Common myeloid progenitor, CD34-positive (primary cell): ENCODE measurements at regions of chr6 and their contacts with region 1.

Region 1: GRCh38 chr6:2931970-2932748 is 29.1 kb upstream of the SERPINB9 start:
- DNase-seq: peak; percentile 84 to 91 (median 90)
- H3K4me3 ChIP-seq: peak overlapping the region in 4 of 7 experiments; percentile 21 to 67 (median 52)
- H3K27ac ChIP-seq: no peak overlapping the region
- H3K4me1 ChIP-seq: peaks cover 0 to 21% (median 10%) of the 10 kb centered on the region in 4 experiments
- H3K27me3 ChIP-seq: no peaks in the 10 kb centered on the region

Region 2: DNA sequence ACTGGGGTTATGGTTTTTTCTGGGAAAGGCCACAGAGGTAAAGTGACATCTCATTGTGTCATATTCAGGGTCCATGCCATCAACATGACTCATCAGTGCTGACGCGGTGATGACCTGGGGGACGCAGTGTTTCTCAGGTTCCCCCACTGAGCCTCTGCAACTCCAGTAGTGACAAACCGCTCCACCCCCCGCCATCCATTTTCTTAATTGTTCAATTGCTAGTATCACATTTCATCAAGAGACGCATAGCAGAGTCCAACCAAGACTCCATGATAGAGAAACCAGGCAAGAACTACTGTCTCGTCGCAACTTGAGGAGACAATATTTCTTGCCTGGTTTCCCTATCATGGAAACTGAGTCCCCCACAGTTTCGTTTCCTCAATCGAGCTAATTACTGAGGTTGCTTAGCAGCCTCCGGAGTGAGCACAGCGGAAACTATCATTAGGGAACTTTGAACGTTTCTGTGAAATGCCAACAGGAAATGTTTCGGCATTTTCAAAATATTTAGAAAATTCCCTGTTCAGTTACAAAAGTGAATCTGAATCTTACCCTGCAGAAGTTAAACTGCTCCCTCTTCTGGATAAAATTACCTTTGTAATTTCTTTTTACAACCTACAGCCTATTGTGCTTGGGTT is 78.3 kb before region 1 on chr6:
- CTCF ChIA-PET with region 1: interaction called, 208 read pairs
- POLR2A ChIA-PET with region 1: no interaction called
- DNase-seq: peak; percentile 48 to 77 (median 73)
- H3K4me3 ChIP-seq: peak overlapping the region in 6 of 7 experiments; percentile 16 to 72 (median 42)
- H3K27ac ChIP-seq: peak overlapping the region; percentile 52 to 88
- H3K4me1 ChIP-seq: peaks cover 30 to 58% (median 52%) of the 10 kb centered on the region in 4 experiments
- H3K27me3 ChIP-seq: no peaks in the 10 kb centered on the region

Region 3: DNA sequence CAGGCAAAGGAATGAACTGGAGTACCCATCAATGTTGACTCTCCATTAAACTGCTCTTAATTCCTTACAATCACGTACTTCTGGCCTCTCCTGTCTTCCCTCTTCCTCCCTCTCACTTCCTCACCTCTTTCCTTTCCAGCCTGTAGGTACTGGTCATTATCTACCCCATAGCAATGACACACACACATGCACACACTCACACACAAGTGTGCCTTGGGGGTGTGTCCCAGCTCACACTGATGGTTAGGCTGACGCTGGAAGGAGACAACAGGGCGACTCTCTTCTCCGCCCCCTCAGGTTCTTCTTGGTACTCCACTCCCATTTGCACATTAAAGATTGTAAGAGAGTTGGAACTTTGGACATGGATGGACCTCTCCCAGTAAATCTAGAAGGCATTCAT is 15.1 kb before region 1 on chr6:
- CTCF ChIA-PET with region 1: interaction called, 31 read pairs
- POLR2A ChIA-PET with region 1: no interaction called
- DNase-seq: no peak
- H3K4me3 ChIP-seq: no peak overlapping the region
- H3K27ac ChIP-seq: no peak overlapping the region
- H3K4me1 ChIP-seq: peaks cover 0 to 15% (median 8%) of the 10 kb centered on the region in 4 experiments
- H3K27me3 ChIP-seq: no peaks in the 10 kb centered on the region

Region 4: GRCh38 chr6:3669916-3670315 is 737.8 kb after region 1 on chr6:
- CTCF ChIA-PET with region 1: no interaction called
- POLR2A ChIA-PET with region 1: no interaction called
- DNase-seq: no peak
- H3K4me3 ChIP-seq: no peak overlapping the region
- H3K27ac ChIP-seq: no peak overlapping the region
- H3K4me1 ChIP-seq: no peaks in the 10 kb centered on the region
- H3K27me3 ChIP-seq: no peaks in the 10 kb centered on the region